ENCODE measurements at regions of chr14 and their contacts with region 1.

Region 1: GRCh38 chr14:69766984-69767368 is at the start of gene SRSF5:
- DNase-seq: peak; percentile 89 to 97 (median 92)
- ATAC-seq: peak; percentile 78
- H3K4me3 ChIP-seq: peak within 1 kb of the TSS; percentile 97
- H3K4me3 Mint-ChIP-seq: peak within 1 kb of the TSS; percentile 100
- H3K27ac ChIP-seq: peak within 1 kb of the TSS; percentile 100
- H3K27ac Mint-ChIP-seq: peak within 1 kb of the TSS; percentile 100
- H3K4me1 ChIP-seq: peaks cover 53% of the 10 kb centered on the region
- H3K4me1 Mint-ChIP-seq: peaks cover 83% of the 10 kb centered on the region
- H3K27me3 ChIP-seq: no peaks in the 10 kb centered on the region
- H3K27me3 Mint-ChIP-seq: no peaks in the 10 kb centered on the region
- CTCF ChIP-seq: no peak
- total RNA-seq, gene SRSF5: 1,437 to 1,479 TPM

Region 2: DNA sequence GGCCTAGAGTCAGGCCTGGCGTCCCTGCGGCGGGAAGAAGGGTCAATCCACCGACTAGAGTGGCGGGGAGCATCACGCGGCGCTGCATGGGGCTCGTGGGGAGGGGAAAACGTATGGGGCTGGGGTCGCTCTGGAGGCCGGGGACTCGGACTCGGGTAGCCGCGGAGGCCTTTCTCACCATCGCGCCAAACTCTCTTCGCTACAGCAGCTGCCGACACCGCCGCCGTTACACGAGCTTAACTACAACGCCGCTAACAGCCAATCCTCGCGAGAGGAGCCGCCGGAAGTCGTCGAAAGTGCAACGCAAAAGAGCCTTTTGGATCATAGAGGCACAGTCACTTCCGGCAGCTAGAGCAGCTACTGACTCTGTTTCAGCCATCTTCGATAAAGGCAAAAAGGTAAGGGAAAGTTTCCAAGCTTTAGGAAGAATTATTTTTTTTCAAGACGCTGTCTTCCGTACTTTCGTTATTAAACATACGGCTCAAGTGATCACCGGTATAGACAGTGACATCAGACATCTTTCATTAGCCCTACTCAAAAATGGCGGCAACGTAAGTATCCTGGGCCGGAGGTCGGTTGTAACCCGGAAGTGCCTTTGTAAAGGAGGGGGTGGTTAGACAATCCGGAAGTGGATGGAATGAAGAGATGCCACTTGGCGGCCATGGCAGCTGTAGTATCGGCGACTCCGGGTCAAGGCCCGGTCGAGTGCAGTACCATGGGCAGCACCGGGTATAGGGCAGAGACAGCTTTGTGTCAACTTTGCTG is 368.7 kb before region 1 on chr14 and contains the starts of genes ERH and SLC39A9:
- CTCF ChIA-PET with region 1: no interaction called
- POLR2A ChIA-PET with region 1: interaction called, 29 read pairs
- intact Hi-C with region 1: loop called (anchors 2 to 10 kb)
- DNase-seq: peak; percentile 90 to 98 (median 93)
- ATAC-seq: peak; percentile 84
- H3K4me3 ChIP-seq: peak within 1 kb of the TSS; percentile 94
- H3K4me3 Mint-ChIP-seq: peak within 1 kb of the TSS; percentile 96
- H3K27ac ChIP-seq: peak within 1 kb of the TSS; percentile 82 to 92
- H3K27ac Mint-ChIP-seq: peak within 1 kb of the TSS; percentile 99
- H3K4me1 ChIP-seq: peaks cover 53% of the 10 kb centered on the region
- H3K4me1 Mint-ChIP-seq: peaks cover 85% of the 10 kb centered on the region
- H3K27me3 ChIP-seq: no peaks in the 10 kb centered on the region
- H3K27me3 Mint-ChIP-seq: no peaks in the 10 kb centered on the region
- CTCF ChIP-seq: no peak
- total RNA-seq, gene ERH: 87.0 to 96.3 TPM
- total RNA-seq, gene SLC39A9: 19.5 to 20.5 TPM

Region 3: GRCh38 chr14:69660344-69661193 is 106.4 kb before region 1 on chr14:
- CTCF ChIA-PET with region 1: no interaction called
- POLR2A ChIA-PET with region 1: no interaction called
- intact Hi-C with region 1: no loop called
- DNase-seq: no peak
- ATAC-seq: no peak
- H3K4me3 ChIP-seq: no peak overlapping the region
- H3K4me3 Mint-ChIP-seq: no peak overlapping the region
- H3K27ac ChIP-seq: no peak overlapping the region
- H3K27ac Mint-ChIP-seq: peak overlapping the region; percentile 52
- H3K4me1 ChIP-seq: peaks cover 43% of the 10 kb centered on the region
- H3K4me1 Mint-ChIP-seq: peaks cover 95% of the 10 kb centered on the region
- H3K27me3 ChIP-seq: no peaks in the 10 kb centered on the region
- H3K27me3 Mint-ChIP-seq: no peaks in the 10 kb centered on the region
- CTCF ChIP-seq: no peak

Region 4: DNA sequence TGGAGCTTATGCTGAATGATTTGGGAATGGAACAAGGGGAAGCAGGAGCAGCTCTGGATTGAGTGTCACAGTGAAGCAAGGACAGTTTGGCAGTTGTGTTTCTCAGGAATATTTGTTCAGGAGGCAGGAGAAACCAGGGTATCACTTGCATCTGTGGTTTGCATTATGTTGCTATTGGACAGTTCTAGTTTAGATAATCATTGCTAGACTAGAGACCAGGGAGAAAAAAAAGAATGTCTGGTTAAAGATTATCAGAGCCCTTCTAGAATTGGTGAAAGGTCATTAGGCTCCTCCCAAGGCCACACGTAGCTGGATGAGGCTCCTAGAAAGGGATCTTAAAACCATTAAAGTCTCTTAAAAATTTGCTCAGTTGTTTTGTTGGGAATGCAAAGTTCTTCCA is 17.0 kb before region 1 on chr14:
- CTCF ChIA-PET with region 1: no interaction called
- POLR2A ChIA-PET with region 1: interaction called, 32 read pairs
- intact Hi-C with region 1: no loop called
- DNase-seq: no peak
- ATAC-seq: no peak
- H3K4me3 ChIP-seq: no peak overlapping the region
- H3K4me3 Mint-ChIP-seq: no peak overlapping the region
- H3K27ac ChIP-seq: no peak overlapping the region
- H3K27ac Mint-ChIP-seq: no peak overlapping the region
- H3K4me1 ChIP-seq: peaks cover 4% of the 10 kb centered on the region
- H3K4me1 Mint-ChIP-seq: peaks cover 7% of the 10 kb centered on the region
- H3K27me3 ChIP-seq: no peaks in the 10 kb centered on the region
- H3K27me3 Mint-ChIP-seq: no peaks in the 10 kb centered on the region
- CTCF ChIP-seq: no peak

Region 5: DNA sequence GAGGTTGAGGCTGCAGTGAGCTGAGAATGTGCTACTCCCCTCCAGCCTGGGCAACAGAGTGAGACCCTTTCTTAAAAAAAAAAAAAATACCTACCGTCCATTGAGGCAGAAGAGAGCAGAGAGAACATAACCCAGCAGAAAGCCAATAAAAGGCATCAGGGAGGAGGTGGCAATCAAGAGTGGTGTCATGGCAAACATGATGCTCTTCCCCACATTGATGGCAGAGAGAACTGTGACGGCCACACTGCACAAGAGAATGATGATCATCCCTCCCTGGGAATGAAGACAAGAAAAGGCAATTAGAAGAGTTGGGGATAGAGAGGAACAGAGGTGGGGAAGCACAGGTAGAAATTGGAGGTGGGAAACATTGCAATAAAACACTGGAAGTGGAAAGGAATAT is 12.1 kb after region 1 on chr14:
- CTCF ChIA-PET with region 1: no interaction called
- POLR2A ChIA-PET with region 1: interaction called, 62 read pairs
- intact Hi-C with region 1: no loop called
- DNase-seq: no peak
- ATAC-seq: no peak
- H3K4me3 ChIP-seq: no peak overlapping the region
- H3K4me3 Mint-ChIP-seq: no peak overlapping the region
- H3K27ac ChIP-seq: no peak overlapping the region
- H3K27ac Mint-ChIP-seq: peak overlapping the region; percentile 21
- H3K4me1 ChIP-seq: peaks cover 5% of the 10 kb centered on the region
- H3K4me1 Mint-ChIP-seq: peaks cover 68% of the 10 kb centered on the region
- H3K27me3 ChIP-seq: no peaks in the 10 kb centered on the region
- H3K27me3 Mint-ChIP-seq: no peaks in the 10 kb centered on the region
- CTCF ChIP-seq: no peak

Measured in CD4-positive, alpha-beta T cell (primary cell).